Heart left ventricle (tissue), 16 donors: ENCODE measurements at regions of chr9 and their contacts with region 1.

Region 1: DNA sequence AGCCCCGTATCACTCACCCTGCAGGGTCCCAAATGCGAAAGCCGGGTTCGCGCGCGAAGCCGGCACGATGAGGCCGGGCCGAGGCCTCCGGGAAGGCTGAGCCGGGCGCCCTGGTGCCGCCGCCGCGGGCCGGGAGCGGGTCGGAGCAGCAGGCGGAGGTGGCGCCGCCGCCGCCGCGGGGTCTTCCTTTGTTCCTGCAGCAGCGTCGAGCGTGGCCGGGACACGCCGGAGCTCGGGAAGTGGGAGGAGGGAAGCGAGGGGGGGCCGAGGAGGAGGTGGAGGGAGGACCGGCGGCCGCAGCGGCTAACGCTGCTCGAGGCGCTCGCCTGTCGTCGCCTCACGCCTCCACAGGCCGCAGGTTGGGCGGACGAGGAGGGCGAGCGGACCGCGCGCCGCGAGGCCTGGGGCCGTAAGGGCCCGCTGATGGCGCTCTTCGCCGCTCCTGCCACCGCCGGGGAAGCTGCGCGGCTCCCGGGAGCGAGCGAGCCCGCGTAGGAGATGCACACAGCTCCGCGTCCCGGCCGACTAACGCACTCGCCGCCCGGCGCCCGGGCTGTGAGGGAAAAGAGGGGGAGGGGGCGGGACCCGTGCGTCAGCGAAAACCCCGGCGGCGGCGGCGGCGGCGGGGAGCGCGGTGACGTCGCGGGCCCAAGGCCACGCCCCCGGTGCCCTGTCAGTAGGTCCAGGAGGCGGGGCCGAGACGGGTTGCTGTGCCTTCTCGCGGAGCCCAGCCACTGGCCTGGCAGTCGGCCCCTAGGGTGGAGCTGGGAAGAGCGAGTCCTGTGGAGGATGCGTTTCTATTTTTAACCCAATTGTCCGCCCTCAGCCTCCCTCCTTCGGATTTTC is at the start of gene ZFAND5:
- DNase-seq: peak; percentile 99 to 100 (median 99)
- ATAC-seq: peak; percentile 94 to 97 (median 95)
- H3K4me3 ChIP-seq: peak within 1 kb of the TSS; percentile 86 to 96 (median 92)
- H3K27ac ChIP-seq: peak within 1 kb of the TSS; percentile 99 to 100 (median 100)
- H3K4me1 ChIP-seq: peaks cover 4 to 44% (median 23%) of the 10 kb centered on the region in 12 donors
- H3K27me3 ChIP-seq: no peaks in the 10 kb centered on the region
- CTCF ChIP-seq: peak in 2 of 12 donors; percentile 2 to 24
- POLR2A ChIP-seq: peak; percentile 95 to 100
- total RNA-seq, gene ZFAND5: 125 to 275 (median 205) TPM

Region 2: DNA sequence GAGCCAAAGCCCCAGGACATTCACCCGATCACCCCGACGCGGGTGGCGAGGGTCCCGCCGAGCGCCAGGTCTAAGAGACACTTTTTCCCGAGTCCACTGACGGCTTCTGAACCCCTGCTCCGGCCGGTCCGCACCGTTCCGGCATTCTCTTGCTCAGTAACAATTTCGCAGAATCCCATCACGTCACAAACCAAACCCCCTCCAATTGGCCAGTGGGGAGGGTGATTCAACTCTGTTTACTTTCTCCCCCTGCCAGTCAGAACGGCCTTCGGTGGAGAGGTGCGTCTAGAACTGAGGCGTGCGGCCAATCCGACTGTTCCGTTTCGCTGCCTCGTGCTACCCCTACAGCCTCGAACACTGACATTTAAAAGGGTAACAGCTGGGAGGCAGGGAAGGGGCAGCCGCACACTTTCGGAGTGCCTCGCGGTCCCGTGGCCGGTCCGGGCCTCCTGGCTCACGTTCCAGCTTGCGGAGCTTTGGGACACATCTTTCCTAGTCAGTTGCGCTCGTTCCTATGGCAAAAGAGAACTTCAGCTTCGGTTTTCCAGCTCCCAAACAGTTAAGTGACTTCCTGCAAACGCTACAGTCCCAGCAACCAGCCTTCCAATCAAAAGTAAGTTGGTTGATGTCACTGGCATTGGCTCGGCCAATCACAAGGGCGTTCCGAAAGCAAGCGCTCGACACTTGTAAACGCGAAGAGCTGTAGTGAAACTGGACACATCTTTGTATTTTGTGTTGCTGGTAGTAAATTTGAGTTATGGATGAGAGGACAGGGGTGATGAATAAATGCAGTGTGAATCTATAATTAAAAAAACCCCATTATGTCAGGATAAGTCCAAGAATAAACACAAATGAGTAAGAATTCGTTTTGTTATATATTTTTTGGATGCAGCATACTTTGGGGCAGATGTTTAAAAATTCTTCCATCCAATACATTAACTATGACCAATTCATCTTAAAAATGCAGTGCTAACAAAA is 1950.8 kb before region 1 on chr9 and contains the start of gene KLF9:
- intact Hi-C with region 1: loop called in 2 of 10 experiments (anchors 10 kb)
- DNase-seq: peak; percentile 93 to 97 (median 95)
- ATAC-seq: peak; percentile 77 to 82 (median 80)
- H3K4me3 ChIP-seq: peak within 1 kb of the TSS; percentile 76 to 99 (median 90)
- H3K27ac ChIP-seq: peak within 1 kb of the TSS; percentile 98 to 100 (median 100)
- H3K4me1 ChIP-seq: peaks cover 10 to 64% (median 53%) of the 10 kb centered on the region in 12 donors
- H3K27me3 ChIP-seq: no peaks in the 10 kb centered on the region
- CTCF ChIP-seq: no peak
- POLR2A ChIP-seq: peak; percentile 48 to 97
- total RNA-seq, gene KLF9: 28.7 to 74.8 (median 46.0) TPM

Region 3: DNA sequence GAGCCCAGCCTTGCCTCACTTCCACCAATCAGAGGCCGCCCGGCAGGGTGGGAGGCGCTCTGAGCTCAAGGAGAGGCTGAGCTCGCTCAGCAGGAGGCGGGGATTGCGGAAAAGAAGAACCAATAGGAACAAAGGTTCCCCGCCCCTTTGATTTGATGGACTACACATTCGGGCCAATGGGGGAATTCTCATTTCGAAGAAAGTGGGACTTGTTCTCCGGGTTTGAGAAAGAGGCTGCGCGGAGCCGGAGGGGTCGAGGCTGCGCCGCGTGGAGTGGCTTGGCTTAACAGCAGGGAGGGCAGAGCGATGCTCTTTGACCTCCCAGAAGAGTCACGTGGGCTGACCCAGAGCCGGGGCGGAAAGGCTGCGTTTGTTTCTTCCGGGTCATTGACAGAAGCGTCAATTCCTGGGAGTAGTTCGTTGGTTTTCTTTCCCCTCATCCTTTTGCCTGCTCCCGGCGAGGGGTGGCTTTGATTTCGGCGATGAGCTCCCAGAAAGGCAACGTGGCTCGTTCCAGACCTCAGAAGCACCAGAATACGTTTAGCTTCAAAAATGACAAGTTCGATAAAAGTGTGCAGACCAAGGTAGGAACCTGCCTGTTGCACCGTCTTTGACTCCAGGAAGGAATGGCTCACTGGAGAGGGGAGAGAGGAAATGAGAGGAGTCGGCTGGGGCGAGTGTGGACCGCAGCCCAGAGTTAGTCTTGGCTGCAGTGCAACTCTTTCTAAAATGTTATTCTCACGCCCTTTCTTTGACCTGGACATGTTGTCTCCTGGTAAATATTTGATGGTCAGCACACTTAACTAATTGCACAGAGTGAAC is 453.4 kb before region 1 on chr9 and contains the start of gene C9orf85:
- intact Hi-C with region 1: loop called in 1 of 10 experiments (anchors 10 kb)
- DNase-seq: peak; percentile 99 to 100 (median 99)
- ATAC-seq: peak; percentile 99
- H3K4me3 ChIP-seq: peak within 1 kb of the TSS; percentile 66 to 98 (median 94)
- H3K27ac ChIP-seq: peak within 1 kb of the TSS; percentile 70 to 97 (median 94)
- H3K4me1 ChIP-seq: peaks cover 0 to 47% (median 33%) of the 10 kb centered on the region in 12 donors
- H3K27me3 ChIP-seq: no peaks in the 10 kb centered on the region
- CTCF ChIP-seq: no peak
- POLR2A ChIP-seq: no peak
- total RNA-seq, gene C9orf85: 3.6 to 9.7 (median 4.8) TPM

Region 4: DNA sequence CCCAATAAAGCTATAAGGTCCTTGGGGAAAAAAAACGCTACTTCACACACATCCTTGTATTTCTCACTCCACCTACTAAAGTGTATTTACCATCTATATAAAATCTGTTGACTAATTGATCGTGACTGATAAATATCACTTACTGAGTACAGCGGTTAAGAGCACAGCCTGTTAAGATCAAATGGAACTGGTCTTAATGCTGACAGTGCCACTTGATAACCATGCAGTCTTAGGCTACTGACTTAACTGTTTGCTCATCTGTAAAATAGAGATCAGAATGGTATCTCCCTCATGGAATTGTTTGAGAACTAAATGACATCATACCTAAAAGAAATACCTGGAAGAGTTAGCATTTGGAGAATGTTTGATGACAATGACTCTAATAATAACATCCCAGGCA is 67.4 kb before region 1 on chr9:
- intact Hi-C with region 1: loop called in 4 of 10 experiments (anchors 2 to 10 kb)
- DNase-seq: no peak
- ATAC-seq: no peak
- H3K4me3 ChIP-seq: no peak overlapping the region
- H3K27ac ChIP-seq: no peak overlapping the region
- H3K4me1 ChIP-seq: peaks cover 0 to 38% (median 2%) of the 10 kb centered on the region in 12 donors
- H3K27me3 ChIP-seq: no peaks in the 10 kb centered on the region
- CTCF ChIP-seq: no peak
- POLR2A ChIP-seq: no peak

Region 5: GRCh38 chr9:72473474-72474261 is 108.8 kb after region 1 on chr9:
- intact Hi-C with region 1: loop called in 2 of 10 experiments (anchors 5 to 10 kb)
- DNase-seq: no peak
- ATAC-seq: no peak
- H3K4me3 ChIP-seq: no peak overlapping the region
- H3K27ac ChIP-seq: peak overlapping the region in 1 of 12 donors; percentile 48
- H3K4me1 ChIP-seq: peaks cover 0 to 24% (median 7%) of the 10 kb centered on the region in 12 donors
- H3K27me3 ChIP-seq: no peaks in the 10 kb centered on the region
- CTCF ChIP-seq: no peak
- POLR2A ChIP-seq: no peak

Region 6: DNA sequence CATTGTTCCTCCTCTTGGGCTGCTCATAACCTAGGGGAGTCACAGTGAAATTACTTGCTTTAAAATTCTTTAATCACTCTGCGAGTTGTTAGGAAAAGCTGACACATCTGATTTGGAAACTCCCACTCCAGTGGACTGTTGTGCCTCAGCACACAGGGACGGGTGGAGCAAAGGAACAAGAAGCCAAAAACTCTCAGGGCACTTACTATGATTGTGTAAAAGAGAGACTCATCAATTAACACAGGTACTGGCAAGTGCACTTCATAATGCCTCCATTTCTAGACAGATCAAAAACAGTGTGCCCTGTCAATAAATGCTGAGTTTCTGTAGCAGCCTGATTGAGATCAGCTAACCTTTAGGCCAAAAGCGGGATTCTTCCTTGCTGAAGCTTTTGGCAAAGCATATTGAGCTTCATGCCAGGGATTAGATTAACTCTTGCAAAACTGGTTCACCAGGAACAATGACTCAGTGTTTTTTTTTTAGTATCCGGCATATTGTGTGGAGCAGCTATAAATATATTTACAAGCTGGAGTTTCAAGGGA is 212.4 kb after region 1 on chr9:
- intact Hi-C with region 1: loop called in 4 of 10 experiments (anchors 1 to 5 kb)
- DNase-seq: peak in 2 of 5 donors; percentile 22 to 48
- ATAC-seq: peak; percentile 43 to 84 (median 78)
- H3K4me3 ChIP-seq: peak overlapping the region in 7 of 12 donors; percentile 15 to 51 (median 34)
- H3K27ac ChIP-seq: peak overlapping the region; percentile 26 to 86 (median 60)
- H3K4me1 ChIP-seq: peaks cover 0 to 52% (median 23%) of the 10 kb centered on the region in 12 donors
- H3K27me3 ChIP-seq: no peaks in the 10 kb centered on the region
- CTCF ChIP-seq: no peak
- POLR2A ChIP-seq: no peak

Region 7: GRCh38 chr9:73149371-73150067 is 784.6 kb after region 1 on chr9:
- intact Hi-C with region 1: loop called in 1 of 10 experiments (anchors 10 kb)
- DNase-seq: no peak
- ATAC-seq: peak in 2 of 4 donors; percentile 56 to 73
- H3K4me3 ChIP-seq: peak overlapping the region in 3 of 12 donors; percentile 3 to 32 (median 25)
- H3K27ac ChIP-seq: peak overlapping the region in 11 of 12 donors; percentile 2 to 89 (median 41)
- H3K4me1 ChIP-seq: peaks cover 0 to 62% (median 21%) of the 10 kb centered on the region in 12 donors
- H3K27me3 ChIP-seq: no peaks in the 10 kb centered on the region
- CTCF ChIP-seq: no peak
- POLR2A ChIP-seq: no peak